Activated CD4-positive, alpha-beta memory T cell treated with anti-CD3 and anti-CD28 coated beads, Interleukin-2, amount 10 ng/mL, durations not matched to agents 7 days and 5 days (primary cell): ENCODE measurements at regions of chr7 and their contacts with region 1.

Region 1: DNA sequence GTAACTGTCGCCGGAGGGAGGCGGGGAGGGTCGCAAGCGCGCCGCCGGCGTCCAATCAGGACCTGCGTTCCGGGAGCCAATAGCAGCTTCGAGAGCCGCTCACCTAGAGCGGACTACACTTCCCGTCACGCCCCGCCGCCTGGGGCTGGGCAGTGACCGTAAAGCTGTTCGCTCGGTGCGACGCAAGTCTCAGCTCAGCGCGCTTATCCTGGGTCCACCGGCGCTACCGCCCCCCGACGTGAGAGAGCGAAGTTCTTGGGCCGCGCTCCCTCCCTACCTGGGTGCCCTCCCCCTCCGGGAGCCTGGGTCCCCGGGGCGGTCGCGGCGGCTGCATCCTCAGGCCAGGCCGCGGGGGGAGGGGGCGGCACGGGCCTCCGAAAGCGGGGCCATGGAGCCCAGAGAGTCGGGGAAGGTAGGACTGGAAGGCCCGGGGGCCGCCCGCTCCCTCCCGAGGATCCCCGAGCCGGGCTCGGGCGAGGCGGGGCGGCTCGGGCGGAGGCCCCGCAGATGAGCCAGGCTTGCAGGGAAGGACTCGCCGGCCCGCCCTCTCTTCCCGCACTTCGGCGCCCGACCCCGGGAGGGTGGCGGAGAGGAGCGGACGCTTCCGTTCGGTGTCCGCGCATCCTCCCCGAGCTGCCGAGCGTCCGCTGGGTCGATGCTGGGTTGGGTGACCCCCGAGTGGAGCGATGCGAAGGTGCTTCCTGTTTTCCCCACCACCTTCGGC is at the start of gene ZNF862:
- DNase-seq: peak; percentile 97
- H3K4me3 Mint-ChIP-seq: peak within 1 kb of the TSS; percentile 86
- H3K27ac Mint-ChIP-seq: peak within 1 kb of the TSS; percentile 78
- H3K4me1 Mint-ChIP-seq: peaks cover 23% of the 10 kb centered on the region
- H3K27me3 Mint-ChIP-seq: peaks cover 15% of the 10 kb centered on the region
- total RNA-seq, gene ZNF862: 31.4 to 32.5 TPM

Region 2: DNA sequence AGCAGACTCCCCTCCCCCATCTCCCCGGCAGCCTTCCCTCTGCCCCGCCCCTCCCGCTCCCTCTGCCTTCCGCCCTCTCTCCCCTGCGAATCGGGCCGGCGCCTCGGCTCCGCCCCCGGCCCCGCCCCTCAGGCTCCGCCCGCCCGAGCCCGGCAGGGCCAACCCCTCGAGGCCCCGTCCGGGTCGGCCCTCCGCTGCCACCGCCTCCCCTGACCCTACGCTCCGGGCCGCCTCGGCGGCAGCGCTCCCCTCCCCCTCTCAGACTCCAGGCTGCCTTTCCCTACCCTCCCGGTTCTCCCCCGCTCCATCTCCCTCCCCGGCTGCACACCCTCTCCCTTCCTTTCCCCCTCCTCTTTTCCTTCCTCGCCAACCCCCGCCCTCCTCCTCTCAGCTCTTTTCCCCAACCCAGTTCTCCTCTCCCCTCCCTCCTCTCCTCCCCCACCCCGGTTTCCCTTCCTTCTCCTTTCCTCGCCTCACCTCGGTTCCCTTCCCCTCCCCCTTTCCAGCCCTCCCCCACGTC is 66.6 kb before region 1 on chr7:
- CTCF ChIA-PET with region 1: no interaction called
- POLR2A ChIA-PET with region 1: no interaction called
- DNase-seq: peak; percentile 88
- H3K4me3 Mint-ChIP-seq: peak overlapping the region; percentile 65
- H3K27ac Mint-ChIP-seq: no peak overlapping the region
- H3K4me1 Mint-ChIP-seq: peaks cover 6% of the 10 kb centered on the region
- H3K27me3 Mint-ChIP-seq: peaks cover 22% of the 10 kb centered on the region

Region 3: GRCh38 chr7:149822353-149822943 is 15.9 kb before region 1 on chr7:
- CTCF ChIA-PET with region 1: no interaction called
- POLR2A ChIA-PET with region 1: no interaction called
- DNase-seq: no peak
- H3K4me3 Mint-ChIP-seq: no peak overlapping the region
- H3K27ac Mint-ChIP-seq: no peak overlapping the region
- H3K4me1 Mint-ChIP-seq: no peaks in the 10 kb centered on the region
- H3K27me3 Mint-ChIP-seq: no peaks in the 10 kb centered on the region

Region 4: DNA sequence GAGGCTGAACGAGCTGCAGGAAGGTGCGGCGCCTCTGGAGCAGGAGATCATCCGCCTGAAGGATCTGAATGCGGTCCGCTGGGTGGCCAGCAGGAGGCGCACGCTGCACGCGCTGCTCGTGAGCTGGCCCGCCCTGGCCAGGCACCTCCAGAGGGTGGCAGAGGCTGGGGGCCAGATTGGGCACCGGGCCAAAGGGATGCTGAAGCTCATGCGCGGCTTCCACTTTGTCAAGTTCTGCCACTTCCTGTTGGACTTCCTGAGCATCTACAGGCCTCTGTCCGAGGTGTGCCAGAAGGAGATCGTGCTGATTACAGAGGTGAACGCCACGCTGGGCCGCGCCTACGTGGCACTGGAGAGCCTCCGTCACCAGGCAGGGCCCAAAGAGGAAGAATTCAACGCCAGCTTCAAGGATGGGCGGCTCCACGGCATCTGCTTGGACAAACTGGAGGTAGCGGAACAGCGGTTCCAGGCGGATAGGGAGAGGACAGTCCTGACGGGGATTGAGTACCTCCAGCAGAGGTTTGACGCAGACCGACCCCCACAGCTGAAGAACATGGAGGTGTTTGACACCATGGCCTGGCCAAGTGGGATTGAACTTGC is 23.2 kb after region 1 on chr7:
- CTCF ChIA-PET with region 1: interaction called, 10 read pairs
- POLR2A ChIA-PET with region 1: interaction called, 27 read pairs
- DNase-seq: no peak
- H3K4me3 Mint-ChIP-seq: no peak overlapping the region
- H3K27ac Mint-ChIP-seq: no peak overlapping the region
- H3K4me1 Mint-ChIP-seq: peaks cover 55% of the 10 kb centered on the region
- H3K27me3 Mint-ChIP-seq: no peaks in the 10 kb centered on the region

Region 5: GRCh38 chr7:149883452-149883861 is 45.1 kb after region 1 on chr7:
- CTCF ChIA-PET with region 1: interaction called, 13 read pairs
- POLR2A ChIA-PET with region 1: interaction called, 8 read pairs
- DNase-seq: peak; percentile 68
- H3K4me3 Mint-ChIP-seq: no peak overlapping the region
- H3K27ac Mint-ChIP-seq: no peak overlapping the region
- H3K4me1 Mint-ChIP-seq: peaks cover 13% of the 10 kb centered on the region
- H3K27me3 Mint-ChIP-seq: no peaks in the 10 kb centered on the region